Lower leg skin (tissue), 4 donors: ENCODE measurements at regions of chr19 and their contacts with region 1.

Region 1: GRCh38 chr19:8355631-8356402 is 8.1 kb upstream of the ANGPTL4 start:
- DNase-seq: peak in 1 of 2 donors; percentile 64
- H3K4me3 ChIP-seq: no peak overlapping the region
- CTCF ChIP-seq: no peak
- POLR2A ChIP-seq: no peak

Region 2: GRCh38 chr19:8396563-8397203 is 40.9 kb after region 1 on chr19:
- intact Hi-C with region 1: loop called (anchors 5 kb)
- DNase-seq: peak in 1 of 2 donors; percentile 59
- H3K4me3 ChIP-seq: no peak overlapping the region
- CTCF ChIP-seq: no peak
- POLR2A ChIP-seq: no peak

Region 3: GRCh38 chr19:8505680-8506401 is 150.0 kb after region 1 on chr19:
- intact Hi-C with region 1: loop called (anchors 10 kb)
- DNase-seq: peak; percentile 68 to 92
- H3K4me3 ChIP-seq: peak overlapping the region; percentile 31
- CTCF ChIP-seq: peak in 1 of 3 donors; percentile 42
- POLR2A ChIP-seq: no peak